ENCODE measurements at regions of chr10 and their contacts with region 1.

Region 1: GRCh38 chr10:123043409-123043925 is 34.7 kb downstream of the ACADSB start:
- DNase-seq: peak; percentile 66 to 70
- H3K4me3 ChIP-seq: no peak overlapping the region
- H3K27ac ChIP-seq: no peak overlapping the region
- H3K4me1 ChIP-seq: peaks cover 0 to 8% (median 1%) of the 10 kb centered on the region in 4 experiments; a peak in 2 of 7 replicates
- H3K27me3 ChIP-seq: no peaks in the 10 kb centered on the region
- CTCF ChIP-seq: peak; percentile 68 to 94 (median 91)
- EP300 ChIP-seq: no peak
- POLR2A ChIP-seq: no peak
- RAD21 ChIP-seq: peak; percentile 98 to 99

Region 2: GRCh38 chr10:123092635-123093414 is 49.4 kb after region 1 on chr10:
- CTCF ChIA-PET with region 1: interaction called, 11 read pairs
- POLR2A ChIA-PET with region 1: no interaction called
- DNase-seq: no peak
- H3K4me3 ChIP-seq: no peak overlapping the region
- H3K27ac ChIP-seq: no peak overlapping the region
- H3K4me1 ChIP-seq: no peaks in the 10 kb centered on the region; a peak in 1 of 7 replicates
- H3K27me3 ChIP-seq: no peaks in the 10 kb centered on the region
- CTCF ChIP-seq: no peak
- EP300 ChIP-seq: no peak
- POLR2A ChIP-seq: no peak
- RAD21 ChIP-seq: no peak

Region 3: DNA sequence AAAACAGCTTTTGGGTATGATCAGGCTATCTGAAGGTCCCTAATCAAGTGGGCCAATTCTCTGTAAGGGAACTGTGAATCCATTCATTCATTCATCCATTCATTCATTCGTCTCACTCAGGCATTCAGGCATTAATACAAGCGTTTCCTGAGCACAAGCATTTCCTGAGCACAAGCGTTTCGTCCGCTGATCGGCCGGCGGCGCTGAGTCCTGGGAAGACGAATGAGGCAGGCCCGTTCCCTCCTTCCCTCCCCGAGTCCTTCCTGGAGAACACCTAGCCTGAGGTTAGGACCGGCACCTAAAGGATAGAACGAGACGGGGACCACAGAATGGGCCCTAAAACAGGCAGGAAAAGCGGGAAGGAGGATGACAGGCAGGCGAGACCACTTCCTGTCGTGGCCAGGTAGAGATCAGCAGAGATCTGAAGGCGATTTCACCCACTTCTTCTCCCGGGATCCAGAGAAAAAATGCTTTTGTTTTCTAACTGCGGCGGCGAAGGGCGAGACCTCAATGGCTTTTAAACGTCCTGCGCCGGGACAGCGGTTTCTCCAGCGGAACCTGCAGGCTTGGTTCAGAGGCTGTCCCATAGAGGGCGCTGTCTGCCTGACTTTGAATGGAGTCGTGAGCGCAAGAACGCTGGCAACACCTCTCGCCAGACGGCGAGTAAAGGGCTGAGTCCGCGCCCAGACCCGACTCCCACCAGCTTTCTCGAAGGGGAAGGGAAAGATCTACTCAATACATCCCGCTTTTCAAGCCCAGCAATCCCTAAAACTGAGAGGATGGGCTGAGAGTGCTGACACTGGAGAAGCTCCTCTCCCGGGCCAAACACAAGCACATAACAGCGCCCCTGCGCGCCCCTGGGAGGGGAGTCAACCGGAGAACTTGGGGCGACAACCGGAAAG is 89.4 kb after region 1 on chr10:
- CTCF ChIA-PET with region 1: interaction called, 20 read pairs
- POLR2A ChIA-PET with region 1: no interaction called
- DNase-seq: peak in 1 of 2 experiments; percentile 96
- H3K4me3 ChIP-seq: peak overlapping the region; percentile 25 to 59 (median 48); a peak in 7 of 8 replicates
- H3K27ac ChIP-seq: no peak overlapping the region
- H3K4me1 ChIP-seq: peaks cover 7 to 36% (median 22%) of the 10 kb centered on the region in 4 experiments
- H3K27me3 ChIP-seq: peaks cover 51 to 75% (median 65%) of the 10 kb centered on the region in 4 experiments
- CTCF ChIP-seq: peak; percentile 84 to 93 (median 88)
- EP300 ChIP-seq: peak in 1 of 2 experiments; percentile 37; a peak in 1 of 3 replicates
- POLR2A ChIP-seq: no peak
- RAD21 ChIP-seq: peak; percentile 82 to 88

Region 4: DNA sequence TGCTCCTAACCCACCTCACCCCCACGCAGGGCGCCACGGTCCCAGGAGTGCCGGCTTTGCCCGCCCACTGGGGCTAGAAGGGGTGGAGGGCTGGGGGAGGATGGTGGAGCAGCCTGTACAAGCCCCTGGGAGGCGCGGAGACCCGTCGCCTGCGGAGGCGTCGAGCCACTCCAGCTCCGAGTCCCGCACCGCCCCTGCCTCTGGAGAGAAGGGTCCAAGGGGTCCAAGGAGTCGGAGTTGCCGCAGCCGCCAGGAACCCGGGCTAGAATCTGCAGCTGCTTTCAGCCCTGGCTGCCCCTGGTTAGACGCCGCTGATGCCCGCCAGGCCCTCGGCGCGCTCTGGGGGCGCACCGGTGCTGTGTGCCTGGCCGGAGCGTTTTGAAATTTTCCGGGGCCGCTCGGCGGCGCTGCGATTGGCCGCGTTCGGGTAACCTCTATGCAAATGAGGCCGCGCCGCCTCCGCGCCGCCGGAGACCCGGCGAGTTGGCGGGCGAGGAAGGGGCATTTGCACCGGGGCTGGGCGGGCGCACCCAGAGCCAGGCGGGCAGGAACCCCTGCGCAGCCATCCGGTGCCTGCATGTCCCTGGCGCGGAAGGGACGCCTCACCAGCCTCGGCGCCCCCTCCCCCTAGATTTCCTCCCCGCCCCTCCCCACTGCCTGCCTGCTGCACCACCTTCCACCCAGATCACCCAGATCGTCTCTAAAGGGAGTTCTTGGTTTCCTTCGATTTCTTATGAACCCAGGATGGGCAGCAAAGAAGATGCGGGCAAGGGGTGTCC is 104.4 kb after region 1 on chr10 and contains the start of gene HMX2:
- CTCF ChIA-PET with region 1: interaction called, 11 read pairs
- POLR2A ChIA-PET with region 1: interaction called, 4 read pairs
- DNase-seq: peak in 1 of 2 experiments; percentile 91
- H3K4me3 ChIP-seq: peak within 1 kb of the TSS; percentile 17 to 59 (median 34)
- H3K27ac ChIP-seq: no peak within 1 kb of the TSS
- H3K4me1 ChIP-seq: peaks cover 22 to 65% (median 41%) of the 10 kb centered on the region in 4 experiments
- H3K27me3 ChIP-seq: peaks cover 74 to 97% (median 87%) of the 10 kb centered on the region in 4 experiments
- CTCF ChIP-seq: peak in 2 of 3 experiments; percentile 19 to 44; a peak in 3 of 4 replicates
- EP300 ChIP-seq: no peak
- POLR2A ChIP-seq: no peak
- RAD21 ChIP-seq: no peak; a peak in 2 of 4 replicates
- total RNA-seq, gene HMX2: 1.3 and 2.0 TPM in 2 replicates

Region 5: GRCh38 chr10:123165445-123166072 is 122.1 kb after region 1 on chr10:
- CTCF ChIA-PET with region 1: interaction called, 13 read pairs
- POLR2A ChIA-PET with region 1: no interaction called
- DNase-seq: no peak
- H3K4me3 ChIP-seq: no peak overlapping the region
- H3K27ac ChIP-seq: no peak overlapping the region
- H3K4me1 ChIP-seq: no peaks in the 10 kb centered on the region
- H3K27me3 ChIP-seq: no peaks in the 10 kb centered on the region
- CTCF ChIP-seq: peak; percentile 32 to 46 (median 44); a peak in 3 of 4 replicates
- EP300 ChIP-seq: no peak
- POLR2A ChIP-seq: peak in 1 of 2 experiments; percentile 24; a peak in 1 of 3 replicates
- RAD21 ChIP-seq: peak; percentile 34 to 40

Region 6: DNA sequence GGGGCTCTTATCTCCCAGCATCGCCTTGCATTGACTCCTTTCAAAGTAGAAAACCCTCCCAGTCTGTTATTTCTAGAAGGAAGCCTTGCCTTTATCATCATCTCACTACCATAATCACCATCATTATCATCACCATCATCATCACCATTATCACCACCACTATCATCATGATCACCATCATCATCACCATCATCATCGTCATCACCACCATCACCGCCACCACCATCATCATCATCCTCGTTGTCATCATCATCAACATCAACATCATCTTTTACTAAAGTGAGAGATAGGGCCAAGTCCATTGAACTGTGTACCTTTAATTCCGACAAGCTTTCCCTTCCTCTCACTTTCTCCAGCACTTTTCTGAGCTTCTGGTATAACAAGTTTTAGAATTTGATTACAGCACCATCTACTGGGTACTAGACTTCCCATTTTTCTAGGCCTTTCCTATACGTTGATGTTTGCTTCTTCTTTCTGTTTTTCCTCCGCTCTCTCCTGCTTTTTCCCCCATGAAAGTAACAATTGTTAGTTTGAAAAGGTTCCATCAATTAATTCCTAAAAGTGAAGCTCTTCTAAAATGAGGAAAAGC is 337.1 kb after region 1 on chr10:
- CTCF ChIA-PET with region 1: interaction called, 14 read pairs
- POLR2A ChIA-PET with region 1: no interaction called
- DNase-seq: no peak
- H3K4me3 ChIP-seq: no peak overlapping the region
- H3K27ac ChIP-seq: no peak overlapping the region
- H3K4me1 ChIP-seq: peaks cover 0 to 7% (median 5%) of the 10 kb centered on the region in 4 experiments; a peak in 3 of 7 replicates
- H3K27me3 ChIP-seq: no peaks in the 10 kb centered on the region
- CTCF ChIP-seq: peak in 2 of 3 experiments; percentile 16 to 50; a peak in 2 of 4 replicates
- EP300 ChIP-seq: no peak
- POLR2A ChIP-seq: no peak
- RAD21 ChIP-seq: peak; percentile 59

Region 7: GRCh38 chr10:123559066-123559822 is 515.8 kb after region 1 on chr10:
- CTCF ChIA-PET with region 1: interaction called, 21 read pairs
- POLR2A ChIA-PET with region 1: no interaction called
- DNase-seq: peak; percentile 61 to 94
- H3K4me3 ChIP-seq: no peak overlapping the region
- H3K27ac ChIP-seq: no peak overlapping the region
- H3K4me1 ChIP-seq: peaks cover 0 to 6% (median 2%) of the 10 kb centered on the region in 4 experiments; a peak in 4 of 7 replicates
- H3K27me3 ChIP-seq: no peaks in the 10 kb centered on the region
- CTCF ChIP-seq: peak; percentile 94 to 99 (median 97)
- EP300 ChIP-seq: no peak
- POLR2A ChIP-seq: no peak
- RAD21 ChIP-seq: peak; percentile 100

Measured in H1 (cell line).